ENCODE measurements at regions of chr6 and their contacts with region 1.

Region 1: GRCh38 chr6:90478789-90479602 is 107.9 kb downstream of the MAP3K7 start:
- DNase-seq: peak; percentile 91
- H3K4me3 Mint-ChIP-seq: peak overlapping the region; percentile 3
- H3K27ac Mint-ChIP-seq: peak overlapping the region; percentile 66
- H3K4me1 Mint-ChIP-seq: peaks cover 58% of the 10 kb centered on the region
- H3K27me3 Mint-ChIP-seq: no peaks in the 10 kb centered on the region

Region 2: GRCh38 chr6:89940225-89941027 is 538.6 kb before region 1 on chr6:
- CTCF ChIA-PET with region 1: interaction called, 132 read pairs
- POLR2A ChIA-PET with region 1: interaction called, 3 read pairs
- intact Hi-C with region 1: loop called (anchors 1 kb)
- DNase-seq: peak; percentile 78
- H3K4me3 Mint-ChIP-seq: no peak overlapping the region
- H3K27ac Mint-ChIP-seq: no peak overlapping the region
- H3K4me1 Mint-ChIP-seq: peaks cover 41% of the 10 kb centered on the region
- H3K27me3 Mint-ChIP-seq: no peaks in the 10 kb centered on the region

Region 3: DNA sequence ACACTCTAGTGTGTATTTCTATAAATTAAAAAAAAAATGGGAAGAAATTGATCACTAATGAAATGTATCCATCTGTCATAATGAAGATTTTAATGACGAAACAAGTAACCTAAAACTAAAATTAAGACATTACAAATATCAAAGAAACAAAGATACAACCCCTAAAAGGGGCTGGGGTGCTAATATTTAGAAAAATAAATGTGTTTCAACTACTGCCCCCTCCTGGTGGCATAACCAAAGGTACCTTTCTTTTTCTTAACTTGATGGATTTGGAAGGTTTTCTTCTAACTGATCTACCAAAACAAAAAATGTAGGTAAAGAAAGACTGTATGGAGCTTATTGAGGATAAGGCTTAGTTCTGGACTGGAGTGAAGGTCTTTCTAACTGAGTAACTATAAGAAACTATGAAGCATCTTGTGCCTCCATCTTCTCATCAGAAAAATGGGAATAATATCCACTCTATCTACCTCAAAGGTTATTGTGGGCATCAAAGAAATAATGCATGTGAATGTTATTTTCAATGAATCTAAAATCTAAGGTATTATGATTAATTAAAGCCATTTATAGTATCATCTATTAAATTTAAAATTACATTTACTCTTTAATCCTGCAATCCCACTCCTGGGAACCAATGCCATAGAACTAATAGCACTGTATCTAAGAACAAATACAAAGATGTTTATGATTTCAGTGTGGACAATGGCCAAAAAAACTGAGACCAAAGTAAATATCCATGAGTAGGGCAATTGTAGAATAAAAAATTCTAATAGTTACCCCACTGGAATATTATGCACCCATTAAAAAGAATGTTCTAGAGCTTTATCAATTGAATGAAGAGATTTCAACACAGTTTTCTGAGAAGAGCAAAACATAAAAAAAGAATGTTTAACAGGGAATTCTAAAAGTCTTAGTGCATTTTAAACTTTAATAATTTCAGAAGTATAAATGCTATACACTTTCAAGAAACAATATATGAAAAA is 299.5 kb before region 1 on chr6:
- CTCF ChIA-PET with region 1: interaction called, 9 read pairs
- POLR2A ChIA-PET with region 1: interaction called, 5 read pairs
- intact Hi-C with region 1: loop called (anchors 5 kb)
- DNase-seq: no peak
- H3K4me3 Mint-ChIP-seq: no peak overlapping the region
- H3K27ac Mint-ChIP-seq: no peak overlapping the region
- H3K4me1 Mint-ChIP-seq: peaks cover 59% of the 10 kb centered on the region
- H3K27me3 Mint-ChIP-seq: peaks cover 3% of the 10 kb centered on the region

Region 4: DNA sequence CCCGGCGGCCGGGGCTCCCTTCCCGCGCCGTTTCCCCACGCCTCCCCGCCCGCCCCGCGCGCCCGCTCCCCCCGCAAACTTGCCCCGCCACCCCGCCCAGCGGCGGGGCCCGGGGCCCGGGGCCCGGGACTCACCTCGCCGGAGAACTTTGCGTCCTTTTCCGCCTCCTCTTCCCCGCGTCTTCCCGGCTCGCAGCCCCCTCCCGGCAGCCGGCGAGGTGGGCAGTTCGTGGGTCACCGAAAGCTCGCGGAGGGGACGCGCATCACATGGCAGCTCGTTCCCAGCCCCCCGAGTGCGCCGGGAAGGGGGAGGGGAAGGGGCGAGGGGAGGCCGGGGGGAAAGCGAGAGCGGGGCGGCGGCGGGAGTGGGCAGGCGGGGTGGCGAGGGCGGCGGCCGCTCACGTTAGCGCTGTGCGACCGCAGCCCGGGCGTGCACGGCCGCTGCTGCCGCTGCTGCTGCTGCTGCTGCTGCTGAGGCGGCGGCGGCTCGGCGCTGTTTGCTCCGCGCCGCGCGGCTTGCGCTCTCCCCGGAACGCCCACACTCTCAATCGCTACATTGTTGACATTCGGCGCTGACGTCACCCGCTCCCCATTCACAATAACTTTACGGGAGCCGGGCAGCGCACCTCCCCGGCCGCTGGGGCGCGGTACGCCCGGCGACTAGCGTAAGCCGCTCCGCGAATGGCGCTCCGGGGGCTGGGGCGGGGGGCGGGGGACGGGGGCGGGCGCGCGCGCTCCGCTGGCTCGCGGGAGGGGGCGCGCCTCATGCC is 182.5 kb before region 1 on chr6 and contains the start of gene BACH2:
- CTCF ChIA-PET with region 1: interaction called, 144 read pairs
- POLR2A ChIA-PET with region 1: interaction called, 3 read pairs
- intact Hi-C with region 1: loop called (anchors 2 kb)
- DNase-seq: peak; percentile 97
- H3K4me3 Mint-ChIP-seq: peak within 1 kb of the TSS; percentile 79
- H3K27ac Mint-ChIP-seq: peak within 1 kb of the TSS; percentile 86
- H3K4me1 Mint-ChIP-seq: peaks cover 32% of the 10 kb centered on the region
- H3K27me3 Mint-ChIP-seq: peaks cover 9% of the 10 kb centered on the region
- total RNA-seq, gene BACH2: 49.2 to 55.4 TPM

Region 5: DNA sequence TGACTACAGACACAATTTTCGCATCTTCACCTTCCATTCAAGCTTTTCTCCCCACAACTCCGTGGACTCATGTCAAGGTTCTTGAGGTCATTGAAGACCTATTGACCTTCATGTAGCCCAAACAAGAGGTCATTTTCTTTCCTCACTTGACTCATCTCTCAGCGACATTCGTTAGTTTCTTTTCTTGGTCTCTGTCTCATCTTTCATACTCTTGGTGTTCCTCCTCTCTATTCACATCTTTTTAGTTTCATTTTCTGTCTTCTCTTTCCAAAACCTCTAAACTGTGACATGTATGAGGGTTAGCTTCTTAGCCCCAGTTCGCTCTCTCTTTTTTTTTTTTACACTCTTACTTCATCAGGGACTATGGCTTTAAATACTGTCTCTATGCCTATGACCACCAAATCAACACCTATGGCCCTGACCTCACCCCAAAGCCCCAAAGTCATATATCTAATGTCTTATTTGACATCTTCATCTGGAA is 53.8 kb before region 1 on chr6:
- CTCF ChIA-PET with region 1: interaction called, 12 read pairs
- POLR2A ChIA-PET with region 1: interaction called, 14 read pairs
- intact Hi-C with region 1: no loop called
- DNase-seq: peak; percentile 52
- H3K4me3 Mint-ChIP-seq: peak overlapping the region; percentile 59
- H3K27ac Mint-ChIP-seq: peak overlapping the region; percentile 95
- H3K4me1 Mint-ChIP-seq: peaks cover 38% of the 10 kb centered on the region
- H3K27me3 Mint-ChIP-seq: no peaks in the 10 kb centered on the region

Region 6: DNA sequence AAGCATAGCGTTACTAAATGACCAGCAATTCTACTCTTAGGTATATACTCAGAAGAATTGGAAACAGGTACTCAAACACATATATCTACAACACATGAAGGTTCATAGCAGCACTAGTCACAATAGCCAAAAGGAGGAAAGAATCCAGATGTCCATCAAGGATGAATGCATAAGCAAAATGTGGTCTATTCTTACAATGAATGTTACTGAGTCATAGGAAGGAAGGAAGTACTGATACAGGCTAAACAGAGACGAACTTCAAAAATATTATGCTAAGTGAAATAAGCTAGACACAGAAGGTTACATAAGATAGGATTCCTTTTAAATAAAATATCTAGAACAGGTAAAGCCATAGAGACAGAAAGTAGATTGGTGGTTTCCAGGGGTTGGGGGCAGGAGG is 14.3 kb after region 1 on chr6:
- CTCF ChIA-PET with region 1: interaction called, 24 read pairs
- POLR2A ChIA-PET with region 1: no interaction called
- intact Hi-C with region 1: no loop called
- DNase-seq: no peak
- H3K4me3 Mint-ChIP-seq: no peak overlapping the region
- H3K27ac Mint-ChIP-seq: no peak overlapping the region
- H3K4me1 Mint-ChIP-seq: no peaks in the 10 kb centered on the region
- H3K27me3 Mint-ChIP-seq: peaks cover 16% of the 10 kb centered on the region

Region 7: GRCh38 chr6:90508753-90509152 is 29.8 kb after region 1 on chr6:
- CTCF ChIA-PET with region 1: no interaction called
- POLR2A ChIA-PET with region 1: no interaction called
- intact Hi-C with region 1: no loop called
- DNase-seq: no peak
- H3K4me3 Mint-ChIP-seq: no peak overlapping the region
- H3K27ac Mint-ChIP-seq: no peak overlapping the region
- H3K4me1 Mint-ChIP-seq: no peaks in the 10 kb centered on the region
- H3K27me3 Mint-ChIP-seq: no peaks in the 10 kb centered on the region